Activated CD4-positive, alpha-beta memory T cell treated with anti-CD3 and anti-CD28 coated beads, Interleukin-2, amount 10 ng/mL, durations not matched to agents 7 days and 5 days (primary cell): ENCODE measurements at regions of chr10 and their contacts with region 1.

Region 1: DNA sequence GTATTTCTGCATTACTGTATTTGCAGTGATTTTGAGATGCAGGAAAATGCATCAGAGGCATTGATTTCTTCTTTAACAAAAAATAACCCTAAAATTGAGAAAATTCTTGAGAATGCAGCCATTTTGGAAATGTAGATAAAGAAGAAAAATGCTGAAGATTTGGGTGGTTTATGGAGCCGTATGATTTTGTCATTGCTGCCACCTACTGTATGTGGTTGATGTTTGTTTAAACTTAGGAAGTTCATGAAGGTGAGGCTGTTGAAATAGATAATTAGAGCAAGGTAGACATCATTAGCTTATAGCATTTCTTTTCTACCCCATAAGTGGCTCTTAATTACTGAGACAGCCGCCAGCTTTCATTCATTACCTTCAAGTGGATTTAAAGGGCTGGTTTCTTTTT is 92.1 kb upstream of the SAMD8 start:
- DNase-seq: no peak
- H3K4me3 Mint-ChIP-seq: no peak overlapping the region
- H3K27ac Mint-ChIP-seq: no peak overlapping the region
- H3K4me1 Mint-ChIP-seq: peaks cover 26% of the 10 kb centered on the region
- H3K27me3 Mint-ChIP-seq: no peaks in the 10 kb centered on the region

Region 2: DNA sequence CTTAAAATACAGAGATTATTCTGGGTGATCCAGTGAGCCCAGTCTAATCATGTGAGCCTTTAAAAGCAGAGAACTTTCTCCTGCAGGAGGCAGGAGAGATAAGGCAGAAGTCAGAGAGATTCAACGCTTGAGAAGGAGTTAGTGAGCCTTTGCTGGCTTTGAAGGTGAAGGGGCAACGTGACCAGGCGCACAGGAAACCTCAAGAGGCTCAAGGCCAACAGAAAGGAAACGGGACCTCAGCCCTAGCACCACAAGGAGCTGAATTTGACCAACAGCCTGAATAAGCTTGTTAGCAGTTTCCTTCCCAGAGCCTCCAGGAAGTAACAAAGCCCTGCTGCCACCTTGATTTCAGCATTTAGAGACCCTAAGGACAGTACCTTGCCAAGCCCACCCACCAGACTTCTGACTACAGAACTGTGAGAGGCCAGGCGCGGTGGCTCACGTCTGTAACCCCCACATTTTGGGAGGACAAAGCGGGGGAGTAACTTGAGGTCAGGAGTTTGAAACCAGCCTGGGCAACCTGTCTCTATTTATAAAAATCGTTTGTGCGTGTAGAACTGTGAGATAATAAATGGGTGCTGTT is 280.3 kb before region 1 on chr10:
- CTCF ChIA-PET with region 1: interaction called, 18 read pairs
- POLR2A ChIA-PET with region 1: interaction called, 4 read pairs
- DNase-seq: peak; percentile 71
- H3K4me3 Mint-ChIP-seq: peak overlapping the region; percentile 24
- H3K27ac Mint-ChIP-seq: peak overlapping the region; percentile 83
- H3K4me1 Mint-ChIP-seq: peaks cover 24% of the 10 kb centered on the region
- H3K27me3 Mint-ChIP-seq: no peaks in the 10 kb centered on the region

Region 3: DNA sequence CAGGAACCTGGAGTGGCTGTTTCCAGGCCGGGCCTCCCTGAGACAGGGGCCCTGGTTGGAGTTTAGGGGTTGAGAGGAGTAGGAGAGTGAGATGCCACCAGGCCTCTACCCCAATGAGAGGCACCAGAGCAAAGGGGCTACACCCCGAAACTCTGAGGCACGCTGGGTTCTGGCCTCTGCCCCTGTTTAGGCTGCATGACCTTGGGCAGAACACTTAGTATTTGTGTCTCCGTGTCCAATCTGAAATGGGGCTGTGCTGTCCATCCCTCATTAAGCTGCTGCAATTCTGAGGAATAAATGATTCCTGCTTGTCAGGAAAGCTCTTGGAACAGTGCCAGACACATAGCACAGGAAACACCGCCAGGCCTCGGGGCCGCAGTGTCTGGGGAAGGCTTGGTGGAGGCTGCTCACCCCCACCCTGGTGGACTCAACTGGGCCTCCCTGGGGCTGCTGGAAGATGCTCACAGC is 51.6 kb after region 1 on chr10:
- CTCF ChIA-PET with region 1: no interaction called
- POLR2A ChIA-PET with region 1: no interaction called
- DNase-seq: no peak
- H3K4me3 Mint-ChIP-seq: no peak overlapping the region
- H3K27ac Mint-ChIP-seq: no peak overlapping the region
- H3K4me1 Mint-ChIP-seq: peaks cover 7% of the 10 kb centered on the region
- H3K27me3 Mint-ChIP-seq: no peaks in the 10 kb centered on the region